H1 (cell line): ENCODE measurements at regions of chr4 and their contacts with region 1.

Region 1: GRCh38 chr4:108628411-108628810 is 8.0 kb downstream of the RPL34 start:
- DNase-seq: no peak
- H3K4me3 ChIP-seq: no peak overlapping the region
- H3K27ac ChIP-seq: no peak overlapping the region
- H3K4me1 ChIP-seq: no peaks in the 10 kb centered on the region
- H3K27me3 ChIP-seq: no peaks in the 10 kb centered on the region
- CTCF ChIP-seq: no peak
- EP300 ChIP-seq: no peak
- POLR2A ChIP-seq: peak in 1 of 2 experiments; percentile 19; a peak in 1 of 3 replicates
- RAD21 ChIP-seq: no peak

Region 2: DNA sequence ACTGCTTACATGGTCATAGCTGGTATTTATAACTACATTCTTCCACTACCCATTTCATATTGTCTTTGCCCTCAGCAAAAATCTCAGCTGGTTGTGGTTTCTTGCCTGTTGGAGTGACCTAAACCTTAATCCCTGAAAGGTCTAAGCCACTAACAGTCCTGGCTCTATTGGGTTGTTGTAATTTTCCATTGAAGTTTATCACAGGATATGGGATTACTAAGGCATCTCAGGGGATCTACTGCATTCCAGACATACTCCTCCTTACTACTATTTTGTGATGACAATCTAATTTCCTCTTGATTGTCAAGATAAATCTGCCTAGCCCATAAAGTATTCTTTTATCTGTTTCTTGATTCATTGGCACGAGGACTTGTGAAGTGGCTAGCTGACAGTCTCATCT is 15.8 kb after region 1 on chr4:
- CTCF ChIA-PET with region 1: interaction called, 4 read pairs
- POLR2A ChIA-PET with region 1: interaction called, 27 read pairs
- DNase-seq: no peak
- H3K4me3 ChIP-seq: no peak overlapping the region
- H3K27ac ChIP-seq: no peak overlapping the region
- H3K4me1 ChIP-seq: no peaks in the 10 kb centered on the region
- H3K27me3 ChIP-seq: no peaks in the 10 kb centered on the region
- CTCF ChIP-seq: no peak
- EP300 ChIP-seq: no peak
- POLR2A ChIP-seq: no peak
- RAD21 ChIP-seq: no peak

Region 3: GRCh38 chr4:108881190-108881589 is 252.8 kb after region 1 on chr4:
- CTCF ChIA-PET with region 1: no interaction called
- POLR2A ChIA-PET with region 1: no interaction called
- DNase-seq: no peak
- H3K4me3 ChIP-seq: no peak overlapping the region
- H3K27ac ChIP-seq: no peak overlapping the region
- H3K4me1 ChIP-seq: peaks cover 0 to 4% (median 0%) of the 10 kb centered on the region in 4 experiments; a peak in 1 of 7 replicates
- H3K27me3 ChIP-seq: no peaks in the 10 kb centered on the region
- CTCF ChIP-seq: no peak
- EP300 ChIP-seq: no peak
- POLR2A ChIP-seq: no peak
- RAD21 ChIP-seq: no peak